Dorsolateral prefrontal cortex (tissue), 120 donors: ENCODE measurements at regions of chr5 and their contacts with region 1.

Region 1: GRCh38 chr5:124395287-124395686 is 351.2 kb downstream of the ZNF608 start:
- DNase-seq: peak; percentile 13 to 75 (median 58)
- H3K4me3 ChIP-seq: peak overlapping the region in 36 of 59 donors; percentile 0 to 51 (median 19)
- H3K27ac ChIP-seq: peak overlapping the region; percentile 42 to 95 (median 85)
- H3K27me3 ChIP-seq: no peaks in the 10 kb centered on the region
- CTCF ChIP-seq: peak in 11 of 56 donors; percentile 3 to 37 (median 24)

Region 2: GRCh38 chr5:124263680-124264483 is 131.4 kb before region 1 on chr5:
- intact Hi-C with region 1: loop called in 1 of 2 experiments (anchors 10 kb)
- DNase-seq: peak in 3 of 10 donors; percentile 41 to 60 (median 52)
- H3K4me3 ChIP-seq: peak overlapping the region in 4 of 59 donors; percentile 1 to 30 (median 8)
- H3K27ac ChIP-seq: peak overlapping the region in 58 of 59 donors; percentile 80 to 97 (median 92)
- H3K27me3 ChIP-seq: no peaks in the 10 kb centered on the region
- CTCF ChIP-seq: peak in 5 of 56 donors; percentile 5 to 30 (median 12)

Region 3: GRCh38 chr5:124289641-124290311 is 105.5 kb before region 1 on chr5:
- intact Hi-C with region 1: loop called in 1 of 2 experiments (anchors 10 kb)
- DNase-seq: peak in 9 of 10 donors; percentile 23 to 55 (median 38)
- H3K4me3 ChIP-seq: peak overlapping the region in 1 of 59 donors; percentile 10
- H3K27ac ChIP-seq: peak overlapping the region; percentile 21 to 94 (median 88)
- H3K27me3 ChIP-seq: no peaks in the 10 kb centered on the region
- CTCF ChIP-seq: peak in 6 of 56 donors; percentile 2 to 26 (median 11)

Region 4: GRCh38 chr5:124410539-124411488 is 15.5 kb after region 1 on chr5:
- intact Hi-C with region 1: no loop called
- DNase-seq: no peak
- H3K4me3 ChIP-seq: no peak overlapping the region
- H3K27ac ChIP-seq: no peak overlapping the region
- H3K27me3 ChIP-seq: no peaks in the 10 kb centered on the region
- CTCF ChIP-seq: no peak

Region 5: GRCh38 chr5:124438903-124439281 is 43.6 kb after region 1 on chr5:
- intact Hi-C with region 1: loop called in 1 of 2 experiments (anchors 5 kb)
- DNase-seq: peak in 9 of 10 donors; percentile 53 to 88 (median 75)
- H3K4me3 ChIP-seq: peak overlapping the region in 28 of 59 donors; percentile 2 to 58 (median 36)
- H3K27ac ChIP-seq: peak overlapping the region; percentile 52 to 97 (median 90)
- H3K27me3 ChIP-seq: no peaks in the 10 kb centered on the region
- CTCF ChIP-seq: peak in 3 of 56 donors; percentile 5 to 11 (median 8)

Region 6: DNA sequence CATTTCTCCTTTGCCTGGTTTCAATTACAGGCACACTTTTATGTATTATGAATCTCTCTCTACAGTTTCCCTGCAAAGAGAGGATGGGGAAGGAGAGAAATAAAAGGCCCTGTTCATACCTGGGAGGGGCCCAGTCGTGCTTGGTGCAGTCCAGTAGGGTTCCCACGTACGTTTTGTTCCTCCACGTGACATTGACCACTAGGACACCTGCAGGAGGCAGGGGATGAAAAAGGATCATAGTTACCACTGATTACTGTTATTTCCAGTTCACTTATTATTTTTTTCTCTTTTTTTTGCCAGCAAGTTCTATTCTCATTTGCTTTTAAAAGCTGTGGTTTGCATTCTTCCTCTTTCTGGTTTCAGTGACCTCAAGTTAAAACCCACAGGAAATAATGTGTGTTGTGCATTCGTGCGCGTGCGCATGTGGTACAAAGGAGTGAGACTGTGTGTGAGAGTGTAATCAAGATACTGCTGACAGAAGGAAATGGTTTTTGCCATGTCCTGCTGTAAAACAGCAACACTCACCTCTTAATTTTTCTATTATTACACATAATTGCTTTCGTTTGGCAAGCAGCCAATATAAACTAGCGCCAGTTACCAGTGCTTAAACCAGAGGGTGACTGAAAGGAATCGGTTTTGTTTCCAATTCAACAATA is 254.3 kb after region 1 on chr5:
- intact Hi-C with region 1: loop called in 1 of 2 experiments (anchors 10 kb)
- DNase-seq: peak in 3 of 10 donors; percentile 41 to 49 (median 48)
- H3K4me3 ChIP-seq: peak overlapping the region in 32 of 59 donors; percentile 1 to 76 (median 16)
- H3K27ac ChIP-seq: peak overlapping the region in 54 of 59 donors; percentile 7 to 97 (median 90)
- H3K27me3 ChIP-seq: no peaks in the 10 kb centered on the region
- CTCF ChIP-seq: peak in 2 of 56 donors; percentile 5 to 16